CD8-positive, alpha-beta T cell (primary cell): ENCODE measurements at regions of chr3 and their contacts with region 1.

Region 1: DNA sequence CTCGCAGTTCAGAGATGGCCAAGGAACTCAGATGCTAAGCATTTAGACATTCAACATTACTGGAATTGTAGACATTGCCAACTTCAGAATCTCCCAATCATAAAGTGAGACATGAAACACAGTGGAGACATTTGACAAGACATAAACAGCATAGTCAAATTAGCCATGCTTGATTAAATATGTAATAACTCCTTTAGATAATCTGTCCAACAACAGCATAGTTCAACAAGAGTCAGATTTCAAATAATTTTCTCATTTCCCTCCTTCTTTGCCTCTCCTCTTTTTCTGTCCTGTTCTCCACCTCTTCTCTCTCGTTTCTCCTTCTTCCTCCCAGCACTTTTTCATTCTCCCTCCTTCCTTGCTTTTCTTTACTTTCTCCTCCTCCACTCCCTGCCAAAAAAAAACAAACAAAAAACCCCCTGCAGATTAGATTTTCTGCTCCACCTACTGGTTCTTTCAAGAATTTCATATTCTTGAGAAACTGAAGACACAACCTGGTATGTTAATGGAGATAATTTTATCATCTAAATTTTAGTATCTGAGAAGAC is 20.2 kb downstream of the CPOX start:
- DNase-seq: peak in 2 of 9 experiments; percentile 50 to 66
- ATAC-seq: peak; percentile 61
- H3K4me3 ChIP-seq: no peak overlapping the region
- H3K4me3 Mint-ChIP-seq: peak overlapping the region; percentile 16
- H3K27ac ChIP-seq: no peak overlapping the region
- H3K27ac Mint-ChIP-seq: peak overlapping the region; percentile 78
- H3K4me1 ChIP-seq: peaks cover 7% of the 10 kb centered on the region
- H3K4me1 Mint-ChIP-seq: peaks cover 31% of the 10 kb centered on the region
- H3K27me3 ChIP-seq: no peaks in the 10 kb centered on the region
- H3K27me3 Mint-ChIP-seq: no peaks in the 10 kb centered on the region
- CTCF ChIP-seq: peak; percentile 71

Region 2: GRCh38 chr3:98039322-98040024 is 533.8 kb before region 1 on chr3:
- CTCF ChIA-PET with region 1: interaction called, 9 read pairs
- POLR2A ChIA-PET with region 1: no interaction called
- intact Hi-C with region 1: loop called (anchors 1 to 2 kb)
- DNase-seq: peak; percentile 27 to 89 (median 66)
- ATAC-seq: peak; percentile 96
- H3K4me3 ChIP-seq: peak overlapping the region; percentile 37 to 38
- H3K4me3 Mint-ChIP-seq: peak overlapping the region; percentile 81
- H3K27ac ChIP-seq: peak overlapping the region; percentile 33 to 57
- H3K27ac Mint-ChIP-seq: peak overlapping the region; percentile 92
- H3K4me1 ChIP-seq: no peaks in the 10 kb centered on the region
- H3K4me1 Mint-ChIP-seq: peaks cover 7% of the 10 kb centered on the region
- H3K27me3 ChIP-seq: no peaks in the 10 kb centered on the region
- H3K27me3 Mint-ChIP-seq: peaks cover 22% of the 10 kb centered on the region
- CTCF ChIP-seq: peak; percentile 100

Region 3: DNA sequence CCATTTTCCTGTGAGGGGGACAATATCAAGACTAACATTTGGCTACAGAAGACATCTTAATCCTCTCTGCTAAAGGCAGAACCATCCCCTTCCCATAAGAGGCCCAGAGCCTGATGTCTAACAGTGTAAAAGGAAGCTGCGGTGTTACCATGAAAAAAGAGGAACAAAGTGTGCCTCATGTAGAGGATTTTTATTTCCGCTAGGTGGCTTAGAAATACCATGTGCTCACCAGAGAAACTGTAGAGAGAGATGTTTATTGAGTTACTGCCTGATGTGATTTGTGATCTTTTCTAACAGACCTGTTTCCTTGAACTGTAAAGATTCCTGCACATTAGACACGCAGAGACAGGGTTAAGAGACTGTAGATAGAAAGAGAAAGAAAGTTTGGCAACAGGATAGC is 384.7 kb before region 1 on chr3:
- CTCF ChIA-PET with region 1: no interaction called
- POLR2A ChIA-PET with region 1: no interaction called
- intact Hi-C with region 1: loop called (anchors 2 to 5 kb)
- DNase-seq: peak in 2 of 9 experiments; percentile 0 to 14
- ATAC-seq: no peak
- H3K4me3 ChIP-seq: no peak overlapping the region
- H3K4me3 Mint-ChIP-seq: no peak overlapping the region
- H3K27ac ChIP-seq: no peak overlapping the region
- H3K27ac Mint-ChIP-seq: no peak overlapping the region
- H3K4me1 ChIP-seq: no peaks in the 10 kb centered on the region
- H3K4me1 Mint-ChIP-seq: no peaks in the 10 kb centered on the region
- H3K27me3 ChIP-seq: no peaks in the 10 kb centered on the region
- H3K27me3 Mint-ChIP-seq: peaks cover 7% of the 10 kb centered on the region
- CTCF ChIP-seq: no peak

Region 4: DNA sequence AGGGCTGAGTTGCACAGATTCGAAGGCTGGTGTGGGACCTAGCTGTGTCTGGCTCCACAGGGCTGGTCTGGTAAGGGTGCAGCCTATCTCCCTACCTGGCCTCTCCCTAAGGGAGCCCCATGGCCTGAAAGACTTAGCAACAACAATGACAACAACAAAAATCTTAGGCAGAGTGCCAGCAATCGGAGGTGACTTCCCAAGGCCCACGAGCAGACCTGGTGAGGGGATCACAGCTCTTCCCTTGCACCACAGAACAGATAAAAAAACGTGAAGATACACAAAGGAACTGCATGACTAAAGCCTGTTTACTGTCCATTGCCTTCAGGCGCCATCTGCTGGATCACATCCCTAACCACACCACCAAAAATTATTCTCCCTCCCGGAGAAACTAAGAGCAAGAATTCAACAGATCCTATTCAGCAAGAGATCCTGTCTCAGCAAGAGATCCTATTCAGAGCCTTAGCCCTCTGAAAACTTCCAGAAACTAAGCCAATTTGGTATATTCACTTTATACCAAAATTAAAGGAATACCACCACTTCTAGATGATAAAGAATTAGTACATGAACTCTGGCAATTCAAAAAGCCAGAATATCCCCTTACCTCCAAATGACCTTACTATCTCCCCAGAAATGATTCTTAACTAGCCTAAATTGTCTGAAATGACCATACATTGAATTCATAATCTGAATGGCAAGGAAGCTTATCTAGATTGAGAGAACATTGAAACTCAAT is 243.7 kb before region 1 on chr3:
- CTCF ChIA-PET with region 1: interaction called, 4 read pairs
- POLR2A ChIA-PET with region 1: no interaction called
- intact Hi-C with region 1: loop called in 1 of 2 experiments (anchors 2 kb)
- DNase-seq: peak in 7 of 9 experiments; percentile 10 to 62 (median 37)
- ATAC-seq: peak; percentile 74
- H3K4me3 ChIP-seq: no peak overlapping the region
- H3K4me3 Mint-ChIP-seq: no peak overlapping the region
- H3K27ac ChIP-seq: no peak overlapping the region
- H3K27ac Mint-ChIP-seq: no peak overlapping the region
- H3K4me1 ChIP-seq: no peaks in the 10 kb centered on the region
- H3K4me1 Mint-ChIP-seq: peaks cover 3% of the 10 kb centered on the region
- H3K27me3 ChIP-seq: no peaks in the 10 kb centered on the region
- H3K27me3 Mint-ChIP-seq: peaks cover 21% of the 10 kb centered on the region
- CTCF ChIP-seq: peak; percentile 66

Region 5: GRCh38 chr3:98343647-98344507 is 229.4 kb before region 1 on chr3:
- CTCF ChIA-PET with region 1: interaction called, 4 read pairs
- POLR2A ChIA-PET with region 1: no interaction called
- intact Hi-C with region 1: loop called in 1 of 2 experiments (anchors 5 kb)
- DNase-seq: peak in 2 of 9 experiments; percentile 54 to 55
- ATAC-seq: no peak
- H3K4me3 ChIP-seq: no peak overlapping the region
- H3K4me3 Mint-ChIP-seq: no peak overlapping the region
- H3K27ac ChIP-seq: no peak overlapping the region
- H3K27ac Mint-ChIP-seq: no peak overlapping the region
- H3K4me1 ChIP-seq: no peaks in the 10 kb centered on the region
- H3K4me1 Mint-ChIP-seq: peaks cover 2% of the 10 kb centered on the region
- H3K27me3 ChIP-seq: no peaks in the 10 kb centered on the region
- H3K27me3 Mint-ChIP-seq: peaks cover 2% of the 10 kb centered on the region
- CTCF ChIP-seq: peak; percentile 63

Region 6: DNA sequence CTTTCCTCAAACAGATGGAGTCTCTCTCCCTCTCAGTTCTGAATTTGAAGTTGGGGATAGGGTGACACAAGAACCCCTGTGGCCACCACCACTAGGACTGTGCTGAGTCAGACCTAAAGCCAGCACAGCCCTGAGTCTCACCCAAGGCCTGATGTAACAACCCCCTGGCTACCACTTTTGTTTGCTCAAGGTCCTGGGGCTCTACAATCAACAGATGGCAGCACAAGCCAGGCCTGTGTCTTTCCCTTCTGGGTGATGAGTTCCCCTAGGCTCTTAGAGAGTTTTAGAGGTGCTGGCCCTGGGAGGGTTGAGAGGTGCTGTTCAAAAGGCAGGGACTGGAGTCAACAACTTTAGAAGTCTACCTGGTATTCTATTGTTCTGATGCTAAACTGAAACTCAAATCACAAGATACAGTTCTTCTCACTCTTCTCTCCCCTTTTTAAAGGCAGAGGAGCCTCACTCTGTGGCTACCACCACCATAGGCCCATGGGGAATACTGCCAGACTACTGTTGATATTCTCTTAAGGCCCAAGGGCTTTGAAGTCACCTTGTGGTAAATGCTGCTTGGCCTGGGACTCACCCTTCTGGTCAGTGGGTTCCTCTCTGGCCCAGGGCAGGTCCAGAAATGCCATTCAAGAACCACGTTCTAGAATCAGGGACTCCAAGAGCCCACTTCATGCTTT is 213.1 kb before region 1 on chr3:
- CTCF ChIA-PET with region 1: no interaction called
- POLR2A ChIA-PET with region 1: no interaction called
- intact Hi-C with region 1: loop called in 1 of 2 experiments (anchors 5 kb)
- DNase-seq: peak in 2 of 9 experiments; percentile 17 to 34
- ATAC-seq: no peak
- H3K4me3 ChIP-seq: no peak overlapping the region
- H3K4me3 Mint-ChIP-seq: no peak overlapping the region
- H3K27ac ChIP-seq: no peak overlapping the region
- H3K27ac Mint-ChIP-seq: peak overlapping the region; percentile 49
- H3K4me1 ChIP-seq: no peaks in the 10 kb centered on the region
- H3K4me1 Mint-ChIP-seq: no peaks in the 10 kb centered on the region
- H3K27me3 ChIP-seq: no peaks in the 10 kb centered on the region
- H3K27me3 Mint-ChIP-seq: no peaks in the 10 kb centered on the region
- CTCF ChIP-seq: no peak

Region 7: GRCh38 chr3:98556164-98557130 is 16.8 kb before region 1 on chr3:
- CTCF ChIA-PET with region 1: interaction called, 4 read pairs
- POLR2A ChIA-PET with region 1: interaction called, 3 read pairs
- intact Hi-C with region 1: loop called in 1 of 2 experiments (anchors 1 kb)
- DNase-seq: peak in 8 of 9 experiments; percentile 31 to 85 (median 64)
- ATAC-seq: peak; percentile 83
- H3K4me3 ChIP-seq: no peak overlapping the region
- H3K4me3 Mint-ChIP-seq: peak overlapping the region; percentile 42
- H3K27ac ChIP-seq: peak overlapping the region in 1 of 2 experiments; percentile 54
- H3K27ac Mint-ChIP-seq: peak overlapping the region; percentile 75
- H3K4me1 ChIP-seq: no peaks in the 10 kb centered on the region
- H3K4me1 Mint-ChIP-seq: peaks cover 69% of the 10 kb centered on the region
- H3K27me3 ChIP-seq: no peaks in the 10 kb centered on the region
- H3K27me3 Mint-ChIP-seq: no peaks in the 10 kb centered on the region
- CTCF ChIP-seq: no peak

Region 8: DNA sequence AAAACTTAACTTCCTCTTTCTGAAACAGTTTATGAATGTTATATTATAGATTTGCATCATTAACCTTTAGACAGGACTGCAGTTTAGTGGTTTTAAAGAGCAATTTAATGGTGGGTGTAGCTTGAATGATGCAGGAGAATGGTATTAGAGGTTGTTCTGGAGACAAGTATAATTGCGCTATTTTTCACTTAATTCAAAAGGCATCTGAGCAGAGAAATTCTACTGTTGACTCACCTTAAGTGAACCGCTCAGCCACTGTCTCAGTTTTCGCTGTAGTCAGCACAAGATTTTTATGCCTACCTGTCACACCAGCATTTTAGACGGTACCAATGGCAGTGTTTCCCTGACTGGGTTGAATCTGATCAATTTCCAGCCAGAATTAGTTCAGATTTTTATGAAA is 677.0 kb after region 1 on chr3:
- CTCF ChIA-PET with region 1: no interaction called
- POLR2A ChIA-PET with region 1: no interaction called
- intact Hi-C with region 1: no loop called
- DNase-seq: no peak
- ATAC-seq: no peak
- H3K4me3 ChIP-seq: no peak overlapping the region
- H3K4me3 Mint-ChIP-seq: no peak overlapping the region
- H3K27ac ChIP-seq: no peak overlapping the region
- H3K27ac Mint-ChIP-seq: no peak overlapping the region
- H3K4me1 ChIP-seq: no peaks in the 10 kb centered on the region
- H3K4me1 Mint-ChIP-seq: no peaks in the 10 kb centered on the region
- H3K27me3 ChIP-seq: no peaks in the 10 kb centered on the region
- H3K27me3 Mint-ChIP-seq: no peaks in the 10 kb centered on the region
- CTCF ChIP-seq: no peak

Region 9: GRCh38 chr3:100277255-100277800 is 1704.1 kb after region 1 on chr3:
- CTCF ChIA-PET with region 1: no interaction called
- POLR2A ChIA-PET with region 1: no interaction called
- intact Hi-C with region 1: no loop called
- DNase-seq: no peak
- ATAC-seq: no peak
- H3K4me3 ChIP-seq: no peak overlapping the region
- H3K4me3 Mint-ChIP-seq: no peak overlapping the region
- H3K27ac ChIP-seq: no peak overlapping the region
- H3K27ac Mint-ChIP-seq: no peak overlapping the region
- H3K4me1 ChIP-seq: no peaks in the 10 kb centered on the region
- H3K4me1 Mint-ChIP-seq: peaks cover 40% of the 10 kb centered on the region
- H3K27me3 ChIP-seq: no peaks in the 10 kb centered on the region
- H3K27me3 Mint-ChIP-seq: no peaks in the 10 kb centered on the region
- CTCF ChIP-seq: no peak